A673 (cell line): ENCODE measurements at regions of chr19 and their contacts with region 1.

Region 1: DNA sequence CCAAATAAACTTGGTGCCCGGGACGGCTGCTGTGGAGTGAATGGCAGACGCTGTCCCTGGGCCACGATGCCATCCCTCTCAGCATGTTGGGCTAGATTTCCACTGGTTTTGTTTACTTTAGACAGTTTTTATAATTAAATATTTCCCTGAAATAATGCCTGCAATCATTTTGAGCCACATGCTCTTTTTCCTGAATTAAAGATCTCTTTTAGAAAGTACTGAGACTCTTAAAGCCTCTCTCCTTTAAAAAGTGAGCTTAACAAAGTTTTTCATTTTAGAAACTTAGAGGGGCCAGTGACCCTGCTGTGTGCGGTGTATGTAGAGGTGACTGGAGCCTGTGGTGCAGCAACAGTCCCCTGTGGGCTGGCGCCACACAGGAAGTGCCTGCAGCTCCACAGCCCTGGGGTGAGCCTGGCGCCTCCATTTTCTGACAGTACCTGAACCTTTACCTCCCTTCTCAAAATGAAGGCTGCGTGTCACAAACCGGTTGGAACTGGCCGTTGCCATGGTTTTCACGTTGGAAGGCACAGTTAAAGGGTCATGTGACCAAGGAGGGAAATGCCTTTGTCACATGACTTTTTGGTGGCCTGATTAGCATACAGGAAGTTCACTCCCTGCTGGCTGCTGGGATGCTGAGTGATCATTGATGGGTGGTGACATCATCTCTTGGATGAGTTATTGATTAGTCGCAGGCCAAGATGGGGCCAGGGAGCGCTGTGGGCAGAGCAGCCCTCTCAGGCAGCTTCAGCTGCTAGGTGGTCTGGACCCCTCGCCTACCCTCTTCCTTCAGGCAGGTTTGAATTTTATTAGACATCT is 26.3 kb downstream of the TSSK6 start:
- DNase-seq: peak; percentile 97
- H3K4me3 ChIP-seq: peak overlapping the region; percentile 25
- H3K27ac ChIP-seq: peak overlapping the region; percentile 91
- H3K4me1 ChIP-seq: peaks cover 39% of the 10 kb centered on the region
- H3K27me3 ChIP-seq: no peaks in the 10 kb centered on the region
- CTCF ChIP-seq: no peak

Region 2: DNA sequence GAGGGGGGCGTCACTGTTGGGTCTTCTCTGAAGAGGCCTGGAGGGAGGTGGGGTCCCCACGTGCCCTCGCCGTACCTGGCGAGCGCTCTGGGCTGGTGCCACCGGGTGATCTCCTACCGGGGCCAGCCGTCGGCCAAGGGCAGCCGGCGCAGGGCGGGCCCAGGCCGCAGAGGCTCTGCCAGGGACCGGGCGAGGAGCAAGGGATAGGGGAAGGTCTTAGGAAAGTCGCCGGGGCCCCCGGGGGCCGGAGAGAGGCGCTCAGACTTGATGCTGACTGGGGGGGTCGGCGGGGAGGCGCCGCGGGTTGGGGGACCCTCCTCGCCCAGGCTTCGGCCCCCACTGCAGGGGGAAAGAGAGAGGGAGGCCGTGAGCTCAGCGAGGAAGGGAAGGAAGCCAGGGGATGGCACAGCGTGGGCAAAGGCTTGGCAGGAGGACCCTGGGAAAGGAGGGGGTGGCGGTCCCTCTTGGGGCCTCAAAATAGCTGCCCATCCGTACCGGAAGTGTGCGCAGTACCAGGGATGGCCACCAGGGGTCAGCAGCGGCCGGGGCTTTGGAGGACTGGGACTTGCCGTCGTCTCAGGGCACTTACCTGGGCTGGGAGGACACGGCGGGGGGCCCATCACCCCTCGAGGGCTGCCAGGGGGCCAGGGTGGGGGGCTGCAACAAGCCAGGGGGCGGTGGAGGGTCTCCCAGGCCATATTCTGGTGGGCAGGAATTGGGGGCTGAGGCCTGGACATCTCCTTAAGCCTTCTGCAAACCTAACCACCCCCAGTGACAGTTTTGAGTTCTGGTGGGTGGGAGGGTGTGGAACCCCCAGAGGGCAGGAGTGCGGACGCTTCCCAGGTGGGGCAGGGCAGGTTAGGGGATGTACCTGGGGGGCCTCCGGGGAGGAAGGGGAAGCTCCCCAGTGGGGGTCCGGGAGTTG is 343.1 kb before region 1 on chr19:
- CTCF ChIA-PET with region 1: interaction called, 6 read pairs
- POLR2A ChIA-PET with region 1: no interaction called
- intact Hi-C with region 1: loop called (anchors 5 kb)
- DNase-seq: peak; percentile 83
- H3K4me3 ChIP-seq: peak overlapping the region; percentile 29
- H3K27ac ChIP-seq: peak overlapping the region; percentile 72
- H3K4me1 ChIP-seq: no peaks in the 10 kb centered on the region
- H3K27me3 ChIP-seq: no peaks in the 10 kb centered on the region
- CTCF ChIP-seq: peak; percentile 97

Region 3: GRCh38 chr19:19185853-19186740 is 303.0 kb before region 1 on chr19:
- CTCF ChIA-PET with region 1: interaction called, 4 read pairs
- POLR2A ChIA-PET with region 1: no interaction called
- intact Hi-C with region 1: loop called (anchors 5 kb)
- DNase-seq: peak; percentile 77
- H3K4me3 ChIP-seq: no peak overlapping the region
- H3K27ac ChIP-seq: no peak overlapping the region
- H3K4me1 ChIP-seq: no peaks in the 10 kb centered on the region
- H3K27me3 ChIP-seq: no peaks in the 10 kb centered on the region
- CTCF ChIP-seq: peak; percentile 87

Region 4: GRCh38 chr19:19366612-19367396 is 122.3 kb before region 1 on chr19:
- CTCF ChIA-PET with region 1: interaction called, 5 read pairs
- POLR2A ChIA-PET with region 1: interaction called, 3 read pairs
- intact Hi-C with region 1: loop called (anchors 2 kb)
- DNase-seq: peak; percentile 87
- H3K4me3 ChIP-seq: no peak overlapping the region
- H3K27ac ChIP-seq: peak overlapping the region; percentile 47
- H3K4me1 ChIP-seq: peaks cover 11% of the 10 kb centered on the region
- H3K27me3 ChIP-seq: no peaks in the 10 kb centered on the region
- CTCF ChIP-seq: peak; percentile 92